ENCODE measurements at regions of chr3 and their contacts with region 1.

Region 1: GRCh38 chr3:191809326-191809949 is 348.5 kb downstream of the PYDC2 start:
- DNase-seq: peak; percentile 64
- H3K4me3 ChIP-seq: no peak overlapping the region
- H3K27ac ChIP-seq: no peak overlapping the region
- H3K4me1 ChIP-seq: peaks cover 3% of the 10 kb centered on the region
- H3K27me3 ChIP-seq: no peaks in the 10 kb centered on the region
- CTCF ChIP-seq: peak; percentile 67

Region 2: DNA sequence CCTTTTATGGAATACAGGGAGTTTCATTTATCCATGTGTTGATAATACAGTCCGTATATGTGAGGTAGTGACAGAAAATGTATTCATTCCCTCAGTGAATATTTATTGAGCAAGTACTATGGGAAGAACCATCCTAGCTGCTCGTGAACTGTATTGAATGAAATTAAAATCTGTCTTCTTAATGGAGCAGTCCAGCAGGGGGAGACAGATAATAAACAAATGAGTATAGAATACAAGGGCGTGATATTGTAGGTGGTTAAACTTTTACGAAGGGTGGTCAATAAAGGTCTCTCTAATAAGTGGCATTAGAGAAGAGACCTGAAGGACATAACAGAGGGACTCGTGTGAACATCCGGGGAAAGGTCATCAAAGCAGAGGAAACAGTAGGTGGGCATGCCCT is 673.1 kb before region 1 on chr3:
- CTCF ChIA-PET with region 1: no interaction called
- POLR2A ChIA-PET with region 1: no interaction called
- intact Hi-C with region 1: loop called (anchors 10 kb)
- DNase-seq: peak; percentile 72
- H3K4me3 ChIP-seq: no peak overlapping the region
- H3K27ac ChIP-seq: no peak overlapping the region
- H3K4me1 ChIP-seq: no peaks in the 10 kb centered on the region
- H3K27me3 ChIP-seq: no peaks in the 10 kb centered on the region
- CTCF ChIP-seq: peak; percentile 72

Region 3: GRCh38 chr3:191244242-191244867 is 565.1 kb before region 1 on chr3:
- CTCF ChIA-PET with region 1: no interaction called
- POLR2A ChIA-PET with region 1: no interaction called
- intact Hi-C with region 1: loop called (anchors 10 kb)
- DNase-seq: peak; percentile 40
- H3K4me3 ChIP-seq: no peak overlapping the region
- H3K27ac ChIP-seq: no peak overlapping the region
- H3K4me1 ChIP-seq: peaks cover 24% of the 10 kb centered on the region
- H3K27me3 ChIP-seq: no peaks in the 10 kb centered on the region
- CTCF ChIP-seq: peak; percentile 62; the same call in 1 of the 2 replicates

Region 4: DNA sequence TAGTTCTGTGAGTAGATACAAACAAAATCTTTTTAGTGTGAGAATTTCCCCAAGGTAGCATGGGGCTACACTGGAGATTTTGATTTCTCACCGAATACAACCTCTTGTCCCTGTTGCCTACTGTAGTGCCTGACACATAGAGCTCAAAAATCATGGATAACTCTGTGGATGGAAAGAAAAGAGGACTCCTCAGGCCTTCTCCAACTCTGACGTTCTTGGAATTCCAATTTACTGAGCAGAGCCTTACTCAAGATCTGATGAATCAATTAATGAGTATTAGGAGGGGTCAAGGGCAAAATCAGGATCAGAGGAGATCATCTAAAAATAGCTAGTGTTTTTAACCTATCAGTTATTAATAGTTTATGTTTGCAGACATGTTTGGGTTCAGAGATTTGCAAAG is 395.2 kb before region 1 on chr3:
- CTCF ChIA-PET with region 1: no interaction called
- POLR2A ChIA-PET with region 1: no interaction called
- intact Hi-C with region 1: loop called (anchors 2 kb)
- DNase-seq: no peak
- H3K4me3 ChIP-seq: no peak overlapping the region
- H3K27ac ChIP-seq: no peak overlapping the region
- H3K4me1 ChIP-seq: no peaks in the 10 kb centered on the region
- H3K27me3 ChIP-seq: no peaks in the 10 kb centered on the region
- CTCF ChIP-seq: no peak

Region 5: DNA sequence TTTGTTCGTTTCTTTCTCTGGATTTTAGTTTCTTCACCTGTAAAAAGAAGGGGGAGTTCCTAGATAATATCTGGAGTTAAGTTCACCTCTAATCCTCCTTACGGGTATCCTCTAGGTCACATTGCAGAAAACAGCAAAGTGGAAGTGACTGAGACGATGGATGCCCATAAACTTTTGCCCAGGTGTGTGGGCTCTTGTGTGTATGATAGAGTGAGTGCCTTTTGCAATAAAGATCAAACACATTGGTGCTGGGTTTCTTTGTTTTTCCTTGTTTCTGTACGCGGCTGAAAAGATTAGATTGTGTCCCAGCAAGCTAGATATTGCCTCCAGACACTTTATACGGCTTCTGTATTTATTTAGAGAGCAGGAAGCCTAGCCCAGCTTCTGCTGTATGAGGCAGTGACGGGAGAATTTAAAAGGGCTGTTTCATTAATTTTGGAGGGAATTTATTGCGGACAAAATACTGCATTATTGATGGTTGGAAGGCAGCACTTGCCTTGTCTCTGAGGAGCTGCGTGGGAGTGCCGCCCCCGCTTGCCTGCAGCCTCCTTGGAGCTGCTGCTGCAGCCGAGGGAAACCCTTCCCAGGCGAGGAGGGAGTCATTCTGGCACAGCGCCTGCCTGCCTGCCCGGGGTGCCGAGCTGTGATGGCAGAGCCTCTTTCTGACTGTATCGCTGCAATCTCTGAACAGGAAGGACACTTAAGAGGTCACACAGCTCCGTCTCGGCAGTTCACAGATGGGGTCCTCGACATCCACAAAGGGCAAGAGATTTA is 309.9 kb before region 1 on chr3:
- CTCF ChIA-PET with region 1: no interaction called
- POLR2A ChIA-PET with region 1: no interaction called
- intact Hi-C with region 1: loop called (anchors 5 kb)
- DNase-seq: peak; percentile 81
- H3K4me3 ChIP-seq: peak overlapping the region; percentile 33
- H3K27ac ChIP-seq: no peak overlapping the region
- H3K4me1 ChIP-seq: peaks cover 20% of the 10 kb centered on the region
- H3K27me3 ChIP-seq: no peaks in the 10 kb centered on the region
- CTCF ChIP-seq: no peak

Region 6: GRCh38 chr3:192082730-192083660 is 273.6 kb after region 1 on chr3:
- CTCF ChIA-PET with region 1: no interaction called
- POLR2A ChIA-PET with region 1: no interaction called
- intact Hi-C with region 1: no loop called
- DNase-seq: no peak
- H3K4me3 ChIP-seq: no peak overlapping the region
- H3K27ac ChIP-seq: no peak overlapping the region
- H3K4me1 ChIP-seq: no peaks in the 10 kb centered on the region
- H3K27me3 ChIP-seq: no peaks in the 10 kb centered on the region
- CTCF ChIP-seq: no peak